Activated CD4-positive, alpha-beta memory T cell treated with anti-CD3 and anti-CD28 coated beads for 36 hours (primary cell): ENCODE measurements at regions of chr7 and their contacts with region 1.

Region 1: DNA sequence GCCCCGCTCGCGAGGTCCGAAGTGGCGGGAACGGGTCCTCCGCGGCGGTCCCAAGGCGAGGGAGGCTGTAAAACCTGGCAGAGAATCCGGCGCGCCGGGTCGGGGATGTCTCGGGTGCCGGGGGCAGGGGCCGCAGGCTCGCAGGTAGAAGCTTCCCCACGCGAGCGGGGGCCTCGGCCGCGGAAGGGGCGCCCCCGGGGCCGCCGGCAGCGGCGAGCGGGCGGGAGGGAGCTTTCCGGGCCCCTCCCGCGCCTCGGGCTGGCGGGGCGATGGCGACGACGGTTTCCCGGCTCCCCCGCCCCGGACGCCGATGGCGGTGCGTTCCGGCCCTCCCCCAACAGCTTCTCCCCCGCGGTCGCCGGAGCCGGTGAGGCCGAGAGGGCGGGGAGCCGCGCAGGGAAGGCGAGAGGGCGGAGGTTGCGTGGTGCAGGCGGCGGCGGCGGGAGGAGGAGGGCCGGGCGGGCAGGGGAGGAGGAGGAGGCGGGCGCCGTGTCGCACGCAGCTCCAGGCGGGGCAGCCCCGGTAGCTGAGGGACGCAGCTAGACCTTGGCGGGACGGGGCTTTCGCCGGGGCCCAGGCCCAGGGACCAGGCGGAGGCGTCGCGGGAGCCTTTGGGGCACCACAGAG is at the start of gene CUL1:
- DNase-seq: peak; percentile 88
- H3K4me3 Mint-ChIP-seq: peak within 1 kb of the TSS; percentile 89
- H3K27ac Mint-ChIP-seq: peak within 1 kb of the TSS; percentile 98
- H3K4me1 Mint-ChIP-seq: peaks cover 57% of the 10 kb centered on the region
- H3K27me3 Mint-ChIP-seq: no peaks in the 10 kb centered on the region
- total RNA-seq, gene CUL1: 64.7 to 69.6 TPM

Region 2: GRCh38 chr7:148563583-148564274 is 134.8 kb before region 1 on chr7:
- CTCF ChIA-PET with region 1: no interaction called
- POLR2A ChIA-PET with region 1: interaction called, 4 read pairs
- intact Hi-C with region 1: loop called (anchors 5 kb)
- DNase-seq: no peak
- H3K4me3 Mint-ChIP-seq: peak overlapping the region; percentile 31
- H3K27ac Mint-ChIP-seq: peak overlapping the region; percentile 89
- H3K4me1 Mint-ChIP-seq: peaks cover 17% of the 10 kb centered on the region
- H3K27me3 Mint-ChIP-seq: peaks cover 7% of the 10 kb centered on the region

Region 3: DNA sequence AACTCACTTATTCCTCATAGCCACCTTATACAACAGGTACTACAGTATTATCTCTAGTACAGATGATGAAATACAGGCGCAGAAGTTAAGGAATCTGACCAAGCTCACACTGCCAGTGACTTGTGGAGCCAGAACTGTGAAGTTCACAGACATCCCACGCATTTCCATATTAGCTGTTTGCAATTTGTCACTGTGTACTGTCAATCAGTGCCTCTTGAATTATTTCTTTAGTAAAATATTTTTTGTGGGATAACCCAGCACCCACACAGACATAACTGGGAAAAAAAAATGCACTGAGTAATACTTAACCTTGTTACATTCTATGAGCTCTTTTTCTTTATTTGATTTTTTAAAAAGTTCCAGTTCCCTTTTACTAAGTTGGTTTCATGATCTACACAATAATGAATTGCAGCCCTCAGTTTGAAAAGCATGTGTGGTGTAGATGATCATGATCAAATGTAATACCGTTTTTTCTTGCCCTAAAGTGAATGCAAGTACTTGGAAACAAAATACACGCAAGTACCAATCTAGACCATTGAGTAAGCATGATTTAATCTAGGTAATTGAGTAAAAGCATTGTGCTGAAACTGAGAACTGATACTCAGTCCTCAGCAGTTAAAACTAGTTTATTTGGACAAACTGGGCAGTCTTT is 14.3 kb after region 1 on chr7:
- CTCF ChIA-PET with region 1: interaction called, 9 read pairs
- POLR2A ChIA-PET with region 1: interaction called, 3 read pairs
- intact Hi-C with region 1: loop called (anchors 1 kb)
- DNase-seq: no peak
- H3K4me3 Mint-ChIP-seq: no peak overlapping the region
- H3K27ac Mint-ChIP-seq: no peak overlapping the region
- H3K4me1 Mint-ChIP-seq: peaks cover 80% of the 10 kb centered on the region
- H3K27me3 Mint-ChIP-seq: no peaks in the 10 kb centered on the region

Region 4: GRCh38 chr7:148773334-148773733 is 74.8 kb after region 1 on chr7:
- CTCF ChIA-PET with region 1: no interaction called
- POLR2A ChIA-PET with region 1: interaction called, 9 read pairs
- intact Hi-C with region 1: loop called (anchors 2 kb)
- DNase-seq: peak; percentile 57
- H3K4me3 Mint-ChIP-seq: no peak overlapping the region
- H3K27ac Mint-ChIP-seq: peak overlapping the region; percentile 86
- H3K4me1 Mint-ChIP-seq: peaks cover 28% of the 10 kb centered on the region
- H3K27me3 Mint-ChIP-seq: no peaks in the 10 kb centered on the region

Region 5: DNA sequence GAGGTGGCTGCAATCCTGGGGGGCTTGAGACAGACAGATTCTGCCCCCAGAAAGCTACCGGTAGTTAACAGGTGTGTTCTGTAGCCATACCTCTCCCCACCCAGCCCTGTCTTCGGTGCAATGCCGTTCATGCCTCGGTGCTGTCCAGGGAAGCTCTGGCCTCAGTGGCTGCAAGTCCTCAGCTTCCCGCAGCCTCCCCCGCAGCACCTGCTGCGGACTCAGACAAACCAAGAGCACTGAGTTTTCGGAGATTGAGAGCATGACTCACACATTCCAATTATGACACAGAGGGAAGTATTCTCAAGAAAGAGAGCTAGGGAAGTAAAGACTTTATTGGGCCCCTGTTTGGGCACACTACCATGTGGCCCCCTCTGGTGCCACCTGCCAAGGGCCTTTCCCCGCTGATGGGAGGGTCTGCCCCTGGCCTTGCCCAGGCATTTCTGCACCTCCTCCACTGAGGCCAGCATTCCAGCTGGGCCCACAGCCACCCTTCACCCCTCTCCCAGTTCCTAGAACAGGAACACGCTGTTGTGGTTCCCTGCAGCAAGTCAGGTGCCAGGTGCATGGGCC is 215.8 kb after region 1 on chr7:
- CTCF ChIA-PET with region 1: no interaction called
- POLR2A ChIA-PET with region 1: interaction called, 12 read pairs
- intact Hi-C with region 1: loop called (anchors 1 kb)
- DNase-seq: peak; percentile 87
- H3K4me3 Mint-ChIP-seq: peak overlapping the region; percentile 62
- H3K27ac Mint-ChIP-seq: peak overlapping the region; percentile 93
- H3K4me1 Mint-ChIP-seq: peaks cover 66% of the 10 kb centered on the region
- H3K27me3 Mint-ChIP-seq: no peaks in the 10 kb centered on the region

Region 6: GRCh38 chr7:148987010-148987750 is 288.7 kb after region 1 on chr7:
- CTCF ChIA-PET with region 1: no interaction called
- POLR2A ChIA-PET with region 1: no interaction called
- intact Hi-C with region 1: loop called (anchors 10 kb)
- DNase-seq: peak; percentile 87
- H3K4me3 Mint-ChIP-seq: peak overlapping the region; percentile 95
- H3K27ac Mint-ChIP-seq: peak overlapping the region; percentile 92
- H3K4me1 Mint-ChIP-seq: peaks cover 40% of the 10 kb centered on the region
- H3K27me3 Mint-ChIP-seq: peaks cover 2% of the 10 kb centered on the region